GM12878 (cell line): ENCODE measurements at regions of chr1 and their contacts with region 1.

Region 1: DNA sequence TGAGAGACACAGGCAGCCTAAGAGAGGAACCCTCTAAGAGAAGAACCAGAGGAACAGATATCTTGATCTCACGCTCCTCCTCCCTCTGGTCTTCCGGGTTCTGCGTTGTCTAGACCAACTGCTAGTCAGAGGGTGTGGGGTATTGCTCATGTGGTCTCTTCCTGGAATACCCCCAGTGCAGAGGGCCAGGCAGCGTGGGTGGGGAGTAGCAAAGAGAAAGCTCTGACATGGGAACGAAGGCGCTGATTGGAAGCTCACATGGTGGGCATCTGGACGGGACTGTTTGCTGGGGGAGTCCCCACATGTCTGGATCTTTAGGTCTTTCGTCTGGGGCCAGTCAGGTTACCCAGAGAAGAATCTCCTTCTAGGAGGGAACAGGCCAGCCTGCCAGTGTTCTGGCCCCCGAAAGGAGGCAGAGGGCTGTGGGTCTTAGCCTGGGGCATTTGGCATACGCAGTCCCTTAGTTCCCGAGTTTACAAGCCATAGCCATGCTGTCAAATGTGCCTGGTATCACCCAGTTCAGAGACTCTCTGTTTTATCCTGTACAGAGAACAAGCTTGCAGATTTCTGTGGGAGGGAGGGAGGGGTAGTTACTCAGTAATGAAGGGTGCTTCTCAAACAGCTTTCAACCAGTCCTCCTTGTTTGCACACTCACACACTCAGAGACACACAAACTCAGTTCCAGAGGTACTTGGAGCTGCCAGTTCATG is 18.3 kb upstream of the IL6R start:
- DNase-seq: no peak
- ATAC-seq: peak; percentile 91
- H3K4me3 ChIP-seq: no peak overlapping the region
- H3K27ac ChIP-seq: no peak overlapping the region
- H3K4me1 ChIP-seq: no peaks in the 10 kb centered on the region; the same call in 1 of the 2 replicates
- H3K27me3 ChIP-seq: no peaks in the 10 kb centered on the region
- CTCF ChIP-seq: no peak
- EP300 ChIP-seq: no peak
- POLR2A ChIP-seq: no peak
- RAD21 ChIP-seq: no peak

Region 2: GRCh38 chr1:154398141-154398540 is 11.3 kb after region 1 on chr1:
- CTCF ChIA-PET with region 1: interaction called, 12 read pairs
- POLR2A ChIA-PET with region 1: interaction called, 8 read pairs
- RAD21 ChIA-PET with region 1: interaction called, 19 read pairs
- SMC1A ChIA-PET with region 1: interaction called, 41 read pairs
- in situ Hi-C with region 1: no loop called
- intact Hi-C with region 1: no loop called
- DNase-seq: no peak
- ATAC-seq: no peak
- H3K4me3 ChIP-seq: no peak overlapping the region
- H3K27ac ChIP-seq: no peak overlapping the region
- H3K4me1 ChIP-seq: peaks cover 5% of the 10 kb centered on the region
- H3K27me3 ChIP-seq: no peaks in the 10 kb centered on the region
- CTCF ChIP-seq: no peak
- EP300 ChIP-seq: no peak
- POLR2A ChIP-seq: no peak
- RAD21 ChIP-seq: no peak

Region 3: GRCh38 chr1:154414606-154415005 is 27.8 kb after region 1 on chr1:
- CTCF ChIA-PET with region 1: interaction called, 4 read pairs
- POLR2A ChIA-PET with region 1: interaction called, 11 read pairs
- RAD21 ChIA-PET with region 1: interaction called, 42 read pairs
- SMC1A ChIA-PET with region 1: interaction called, 7 read pairs
- in situ Hi-C with region 1: no loop called
- intact Hi-C with region 1: no loop called
- DNase-seq: no peak
- ATAC-seq: no peak
- H3K4me3 ChIP-seq: no peak overlapping the region
- H3K27ac ChIP-seq: no peak overlapping the region
- H3K4me1 ChIP-seq: peaks cover 38% of the 10 kb centered on the region
- H3K27me3 ChIP-seq: no peaks in the 10 kb centered on the region
- CTCF ChIP-seq: no peak
- EP300 ChIP-seq: no peak
- POLR2A ChIP-seq: no peak
- RAD21 ChIP-seq: no peak